ENCODE measurements at regions of chr6 and their contacts with region 1.

Region 1: DNA sequence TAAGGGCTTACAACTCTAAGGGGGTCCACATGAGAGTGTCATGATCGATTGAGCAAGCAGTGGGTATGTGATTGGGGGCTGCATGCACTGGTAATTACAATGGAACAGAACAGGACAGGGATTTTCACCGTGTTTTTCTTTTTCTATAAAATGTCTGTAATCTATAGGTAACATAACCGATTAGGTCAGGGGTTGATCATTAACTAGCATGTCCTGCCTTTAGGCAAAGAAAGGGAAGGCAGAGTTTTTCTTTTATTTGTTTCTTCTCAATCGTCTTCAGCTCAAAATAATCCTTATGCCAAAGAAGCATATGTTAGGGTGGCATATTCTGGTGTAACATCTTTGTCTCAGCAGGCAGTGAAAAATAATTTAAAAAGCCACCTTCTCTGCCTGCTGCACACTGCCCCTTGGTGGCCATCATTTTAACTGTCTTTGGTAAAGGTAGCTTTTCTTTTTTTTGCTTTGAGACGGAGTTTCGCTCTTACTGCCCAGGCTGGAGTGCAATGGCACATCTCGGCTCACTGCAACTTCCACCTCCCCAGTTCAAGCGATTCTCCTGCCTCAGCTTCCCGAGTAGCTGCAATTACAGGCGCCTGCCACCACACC is 9.7 kb upstream of the CEP43 start:
- DNase-seq: peak in 7 of 9 experiments; percentile 43 to 72 (median 59)
- ATAC-seq: peak; percentile 82
- H3K4me3 ChIP-seq: no peak overlapping the region
- H3K4me3 Mint-ChIP-seq: no peak overlapping the region
- H3K27ac ChIP-seq: no peak overlapping the region
- H3K27ac Mint-ChIP-seq: no peak overlapping the region
- H3K4me1 ChIP-seq: peaks cover 5% of the 10 kb centered on the region
- H3K4me1 Mint-ChIP-seq: peaks cover 16% of the 10 kb centered on the region
- H3K27me3 ChIP-seq: no peaks in the 10 kb centered on the region
- H3K27me3 Mint-ChIP-seq: no peaks in the 10 kb centered on the region
- CTCF ChIP-seq: peak; percentile 66

Region 2: GRCh38 chr6:166786704-166787293 is 202.7 kb before region 1 on chr6:
- CTCF ChIA-PET with region 1: interaction called, 82 read pairs
- POLR2A ChIA-PET with region 1: no interaction called
- intact Hi-C with region 1: loop called (anchors 1 kb)
- DNase-seq: peak in 5 of 9 experiments; percentile 20 to 75 (median 48)
- ATAC-seq: peak; percentile 48
- H3K4me3 ChIP-seq: no peak overlapping the region
- H3K4me3 Mint-ChIP-seq: no peak overlapping the region
- H3K27ac ChIP-seq: no peak overlapping the region
- H3K27ac Mint-ChIP-seq: no peak overlapping the region
- H3K4me1 ChIP-seq: no peaks in the 10 kb centered on the region
- H3K4me1 Mint-ChIP-seq: no peaks in the 10 kb centered on the region
- H3K27me3 ChIP-seq: no peaks in the 10 kb centered on the region
- H3K27me3 Mint-ChIP-seq: peaks cover 3% of the 10 kb centered on the region
- CTCF ChIP-seq: peak; percentile 88

Region 3: GRCh38 chr6:166907373-166907841 is 82.1 kb before region 1 on chr6:
- CTCF ChIA-PET with region 1: interaction called, 10 read pairs
- POLR2A ChIA-PET with region 1: no interaction called
- intact Hi-C with region 1: no loop called
- DNase-seq: peak in 1 of 9 experiments; percentile 19
- ATAC-seq: peak; percentile 38
- H3K4me3 ChIP-seq: no peak overlapping the region
- H3K4me3 Mint-ChIP-seq: peak overlapping the region; percentile 20
- H3K27ac ChIP-seq: no peak overlapping the region
- H3K27ac Mint-ChIP-seq: peak overlapping the region; percentile 52
- H3K4me1 ChIP-seq: peaks cover 14% of the 10 kb centered on the region
- H3K4me1 Mint-ChIP-seq: peaks cover 18% of the 10 kb centered on the region
- H3K27me3 ChIP-seq: no peaks in the 10 kb centered on the region
- H3K27me3 Mint-ChIP-seq: no peaks in the 10 kb centered on the region
- CTCF ChIP-seq: no peak

Region 4: DNA sequence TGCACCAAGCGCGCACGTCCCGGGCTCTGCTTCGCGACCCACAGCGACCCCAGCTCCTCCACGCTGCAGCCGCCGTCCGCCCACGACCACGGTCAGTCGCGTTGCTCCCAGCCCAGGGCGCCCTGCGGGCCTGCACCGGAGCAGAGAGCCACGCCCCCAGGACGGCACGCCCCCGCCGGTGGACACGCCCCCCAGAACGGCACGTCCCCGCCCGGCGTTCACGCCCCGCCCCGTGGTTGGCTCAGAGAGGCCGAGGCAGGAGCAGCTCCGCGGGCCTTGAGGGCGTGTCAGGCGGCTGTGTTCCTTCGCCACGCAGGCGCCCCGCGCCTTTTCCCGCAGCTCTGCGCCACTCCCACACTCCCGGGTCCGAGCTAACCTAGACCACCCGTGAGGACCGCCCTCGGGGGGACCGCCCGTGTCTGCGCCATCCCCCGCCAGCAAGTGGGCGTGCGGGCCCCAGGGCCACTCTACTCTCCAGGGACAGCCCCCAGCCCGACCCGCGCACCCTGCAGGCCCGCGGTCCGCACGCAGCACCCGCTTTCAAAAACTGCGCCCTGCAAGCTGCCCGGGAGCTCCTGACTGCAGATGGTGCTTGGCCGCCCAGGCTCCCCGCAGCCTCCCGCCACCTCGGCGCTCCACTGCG is 33.0 kb before region 1 on chr6 and contains the start of gene RNASET2:
- CTCF ChIA-PET with region 1: interaction called, 132 read pairs
- POLR2A ChIA-PET with region 1: interaction called, 5 read pairs
- intact Hi-C with region 1: no loop called
- DNase-seq: peak; percentile 96 to 100 (median 99)
- ATAC-seq: peak; percentile 87
- H3K4me3 ChIP-seq: peak within 1 kb of the TSS; percentile 74 to 75
- H3K4me3 Mint-ChIP-seq: peak within 1 kb of the TSS; percentile 93
- H3K27ac ChIP-seq: peak within 1 kb of the TSS; percentile 81 to 86
- H3K27ac Mint-ChIP-seq: peak within 1 kb of the TSS; percentile 98
- H3K4me1 ChIP-seq: peaks cover 68% of the 10 kb centered on the region
- H3K4me1 Mint-ChIP-seq: peaks cover 70% of the 10 kb centered on the region
- H3K27me3 ChIP-seq: no peaks in the 10 kb centered on the region
- H3K27me3 Mint-ChIP-seq: no peaks in the 10 kb centered on the region
- CTCF ChIP-seq: no peak
- total RNA-seq, gene RNASET2: 93.1 to 98.9 TPM

Region 5: DNA sequence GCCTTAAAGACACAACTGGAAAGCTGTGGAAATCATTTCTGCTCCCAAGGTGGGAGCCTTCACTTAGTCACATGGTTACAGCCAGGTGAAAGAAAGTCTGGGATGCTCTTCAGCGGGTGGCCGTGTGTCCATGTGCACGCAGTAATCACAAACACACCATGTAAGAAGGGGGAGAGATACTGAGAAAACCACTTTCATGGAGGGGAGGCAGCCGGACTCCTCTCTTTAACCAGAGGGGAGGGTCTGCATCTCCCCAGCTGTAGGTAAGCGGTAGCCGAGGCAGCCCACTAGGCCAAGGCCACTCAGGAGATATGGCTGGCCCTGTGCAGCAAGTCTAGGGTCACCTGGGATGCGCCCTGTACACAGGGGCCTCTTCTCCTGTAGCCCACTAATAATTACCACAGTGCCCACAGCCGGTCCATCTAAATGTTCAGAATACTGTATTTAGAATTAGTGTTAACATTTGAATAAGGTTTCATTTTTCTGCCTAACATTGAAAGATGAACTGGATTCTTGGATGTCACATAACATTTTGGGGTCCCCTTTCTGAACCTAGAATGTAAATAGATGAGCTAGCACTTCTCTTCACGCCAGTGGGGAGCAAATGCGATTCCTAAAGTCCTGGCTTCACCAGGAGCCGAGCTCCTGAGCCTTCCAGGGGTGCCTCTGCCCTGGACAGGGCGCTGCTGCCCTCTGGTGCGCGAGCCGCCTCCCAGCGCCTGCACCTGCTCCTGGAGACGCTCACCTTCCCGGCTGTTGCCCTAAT is 152.3 kb after region 1 on chr6:
- CTCF ChIA-PET with region 1: interaction called, 26 read pairs
- POLR2A ChIA-PET with region 1: no interaction called
- intact Hi-C with region 1: no loop called
- DNase-seq: peak in 7 of 9 experiments; percentile 7 to 66 (median 41)
- ATAC-seq: peak; percentile 71
- H3K4me3 ChIP-seq: no peak overlapping the region
- H3K4me3 Mint-ChIP-seq: no peak overlapping the region
- H3K27ac ChIP-seq: no peak overlapping the region
- H3K27ac Mint-ChIP-seq: no peak overlapping the region
- H3K4me1 ChIP-seq: no peaks in the 10 kb centered on the region
- H3K4me1 Mint-ChIP-seq: peaks cover 16% of the 10 kb centered on the region
- H3K27me3 ChIP-seq: no peaks in the 10 kb centered on the region
- H3K27me3 Mint-ChIP-seq: peaks cover 8% of the 10 kb centered on the region
- CTCF ChIP-seq: peak; percentile 72

Region 6: DNA sequence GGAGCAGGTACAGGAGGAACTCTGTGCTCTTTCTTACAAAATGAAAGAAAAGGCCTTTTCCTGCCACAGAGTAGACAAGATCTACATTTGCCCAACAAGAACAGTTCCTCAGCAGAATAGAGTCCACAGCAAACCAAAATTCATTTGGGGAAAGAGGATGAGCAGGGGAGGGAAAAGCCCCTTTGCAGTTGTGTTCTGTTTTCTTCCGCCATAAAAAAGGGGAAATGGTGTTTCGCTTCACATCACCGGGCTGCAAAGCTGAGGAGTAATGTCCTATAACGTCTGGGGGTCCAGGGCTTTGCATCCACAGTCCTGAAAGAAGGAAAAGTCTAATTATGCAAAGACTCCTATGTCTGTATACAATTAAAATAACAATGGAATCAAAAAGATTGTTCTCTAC is 168.3 kb after region 1 on chr6 and contains the start of gene GPR31:
- CTCF ChIA-PET with region 1: no interaction called
- POLR2A ChIA-PET with region 1: no interaction called
- intact Hi-C with region 1: no loop called
- DNase-seq: no peak
- ATAC-seq: no peak
- H3K4me3 ChIP-seq: no peak within 1 kb of the TSS
- H3K4me3 Mint-ChIP-seq: no peak within 1 kb of the TSS
- H3K27ac ChIP-seq: no peak within 1 kb of the TSS
- H3K27ac Mint-ChIP-seq: no peak within 1 kb of the TSS
- H3K4me1 ChIP-seq: no peaks in the 10 kb centered on the region
- H3K4me1 Mint-ChIP-seq: peaks cover 4% of the 10 kb centered on the region
- H3K27me3 ChIP-seq: no peaks in the 10 kb centered on the region
- H3K27me3 Mint-ChIP-seq: peaks cover 5% of the 10 kb centered on the region
- CTCF ChIP-seq: no peak
- total RNA-seq, gene GPR31: not detected

Region 7: GRCh38 chr6:167200806-167201205 is 211.3 kb after region 1 on chr6:
- CTCF ChIA-PET with region 1: no interaction called
- POLR2A ChIA-PET with region 1: no interaction called
- intact Hi-C with region 1: no loop called
- DNase-seq: no peak
- ATAC-seq: no peak
- H3K4me3 ChIP-seq: no peak overlapping the region
- H3K4me3 Mint-ChIP-seq: no peak overlapping the region
- H3K27ac ChIP-seq: no peak overlapping the region
- H3K27ac Mint-ChIP-seq: no peak overlapping the region
- H3K4me1 ChIP-seq: no peaks in the 10 kb centered on the region
- H3K4me1 Mint-ChIP-seq: no peaks in the 10 kb centered on the region
- H3K27me3 ChIP-seq: no peaks in the 10 kb centered on the region
- H3K27me3 Mint-ChIP-seq: peaks cover 24% of the 10 kb centered on the region
- CTCF ChIP-seq: no peak